ENCODE measurements at regions of chr1 and their contacts with region 1.

Region 1: DNA sequence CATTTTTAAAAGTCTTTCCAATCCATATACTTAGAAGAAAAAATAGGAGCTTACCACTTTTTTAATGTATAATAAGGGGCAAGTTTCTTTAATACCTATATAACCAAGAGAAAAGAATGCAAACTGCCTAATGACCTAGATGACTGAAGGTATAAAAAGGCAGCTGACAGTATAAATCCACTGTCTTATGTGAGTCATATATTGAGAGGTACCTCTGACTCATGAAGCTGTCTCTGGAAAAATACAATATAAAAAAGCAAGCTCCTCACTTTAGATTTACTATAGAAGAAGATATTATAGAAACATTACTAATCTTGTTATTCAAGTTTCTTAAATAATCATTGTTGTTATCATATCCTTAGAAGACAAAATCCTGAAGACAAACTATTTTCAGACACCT is 144.2 kb downstream of the VAV3 start:
- DNase-seq: no peak
- ATAC-seq: no peak

Region 2: GRCh38 chr1:105865546-105865945 is 1955.3 kb before region 1 on chr1:
- intact Hi-C with region 1: loop called (anchors 5 kb)
- DNase-seq: no peak
- ATAC-seq: no peak